Heart right ventricle (tissue), 16 donors: ENCODE measurements at regions of chr14 and their contacts with region 1.

Region 1: DNA sequence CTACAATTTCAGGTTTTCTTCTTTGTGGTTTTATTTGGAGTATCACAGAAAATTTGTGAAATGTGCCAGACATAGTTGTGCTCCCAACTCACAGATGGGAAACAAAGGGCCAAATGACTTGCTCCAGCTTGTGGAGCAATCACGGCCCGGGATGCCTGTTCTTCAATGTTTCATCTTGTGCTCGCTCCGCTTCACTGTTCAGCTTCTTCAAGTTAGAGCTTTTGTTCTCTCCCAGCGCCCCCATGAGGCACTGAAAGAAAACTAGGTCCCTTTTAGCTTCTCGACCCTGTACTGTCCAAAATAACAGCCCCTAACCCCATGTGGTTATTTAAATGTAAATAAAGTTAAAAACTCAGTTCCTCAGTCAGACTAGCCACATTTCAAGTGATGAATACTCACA is 187.9 kb upstream of the STXBP6 start:
- DNase-seq: no peak
- ATAC-seq: no peak
- H3K4me3 ChIP-seq: no peak overlapping the region
- H3K27ac ChIP-seq: no peak overlapping the region
- H3K4me1 ChIP-seq: no peaks in the 10 kb centered on the region
- H3K27me3 ChIP-seq: peaks cover 0 to 10% (median 5%) of the 10 kb centered on the region in 7 donors
- CTCF ChIP-seq: peak in 5 of 9 donors; percentile 18 to 40 (median 34)

Region 2: GRCh38 chr14:25079311-25079710 is 158.5 kb before region 1 on chr14:
- intact Hi-C with region 1: loop called in 1 of 10 experiments (anchors 5 kb)
- DNase-seq: no peak
- ATAC-seq: no peak
- H3K4me3 ChIP-seq: no peak overlapping the region
- H3K27ac ChIP-seq: no peak overlapping the region
- H3K4me1 ChIP-seq: no peaks in the 10 kb centered on the region
- H3K27me3 ChIP-seq: no peaks in the 10 kb centered on the region
- CTCF ChIP-seq: no peak